Ascending aorta (tissue), 2 donors: ENCODE measurements at regions of chr18 and their contacts with region 1.

Region 1: DNA sequence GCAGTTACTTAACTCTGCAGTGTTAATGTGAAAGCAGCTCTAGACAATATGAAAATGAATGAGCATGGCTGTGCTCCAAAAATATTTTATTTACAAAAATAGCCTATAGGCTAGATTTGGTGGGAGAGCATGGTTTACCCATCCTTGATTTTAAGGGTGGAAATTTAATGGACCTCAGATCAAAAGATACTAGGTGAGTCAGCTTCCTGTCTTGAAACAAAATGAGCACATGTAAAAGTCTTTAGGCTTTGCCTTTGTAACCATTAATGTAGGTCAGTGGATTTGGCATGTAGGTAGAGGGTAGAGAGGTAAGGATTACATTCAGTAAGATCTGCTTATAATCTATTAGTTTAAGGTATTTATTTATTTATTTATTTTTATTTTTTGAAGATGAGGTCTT is 72.7 kb downstream of the GREB1L start:
- DNase-seq: no peak
- H3K4me3 ChIP-seq: no peak overlapping the region
- H3K27ac ChIP-seq: no peak overlapping the region
- H3K4me1 ChIP-seq: peaks cover 0 to 5% of the 10 kb centered on the region in 2 donors
- H3K27me3 ChIP-seq: no peaks in the 10 kb centered on the region
- CTCF ChIP-seq: no peak

Region 2: DNA sequence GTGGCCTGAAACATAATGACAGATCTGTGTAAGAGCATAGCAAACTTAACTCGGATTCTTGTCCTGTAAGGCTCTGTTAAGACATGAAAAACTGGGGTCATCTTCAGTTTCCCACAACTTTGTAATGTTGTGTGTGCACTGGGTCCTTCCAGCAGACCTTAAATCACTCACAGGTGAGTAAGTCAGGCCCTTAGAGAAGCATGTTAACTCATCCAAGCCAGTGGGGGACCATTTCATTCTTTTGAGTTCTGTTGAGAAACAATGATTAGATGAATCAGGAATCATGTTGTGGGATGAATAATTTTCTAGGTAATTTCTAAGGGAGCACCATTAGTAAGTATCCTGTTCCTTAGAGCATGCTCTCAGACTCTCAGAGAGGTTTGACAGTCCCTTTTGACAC is 118.7 kb after region 1 on chr18:
- intact Hi-C with region 1: loop called (anchors 5 kb)
- DNase-seq: no peak
- H3K4me3 ChIP-seq: no peak overlapping the region
- H3K27ac ChIP-seq: no peak overlapping the region
- H3K4me1 ChIP-seq: no peaks in the 10 kb centered on the region
- H3K27me3 ChIP-seq: no peaks in the 10 kb centered on the region
- CTCF ChIP-seq: no peak